ENCODE measurements at regions of chr20 and their contacts with region 1.

Region 1: GRCh38 chr20:36808317-36809257 is 35.0 kb upstream of the DSN1 start:
- DNase-seq: peak; percentile 36
- H3K4me3 ChIP-seq: no peak overlapping the region
- H3K27ac ChIP-seq: no peak overlapping the region
- H3K4me1 ChIP-seq: no peaks in the 10 kb centered on the region
- H3K27me3 ChIP-seq: no peaks in the 10 kb centered on the region
- CTCF ChIP-seq: peak; percentile 84 to 90
- POLR2A ChIP-seq: no peak

Region 2: GRCh38 chr20:36666181-36666740 is 142.3 kb before region 1 on chr20:
- CTCF ChIA-PET with region 1: interaction called, 13 read pairs
- POLR2A ChIA-PET with region 1: no interaction called
- dilution Hi-C with region 1: no loop called
- intact Hi-C with region 1: no loop called
- DNase-seq: peak; percentile 20
- H3K4me3 ChIP-seq: no peak overlapping the region
- H3K27ac ChIP-seq: no peak overlapping the region
- H3K4me1 ChIP-seq: no peaks in the 10 kb centered on the region
- H3K27me3 ChIP-seq: no peaks in the 10 kb centered on the region
- CTCF ChIP-seq: no peak
- POLR2A ChIP-seq: no peak

Region 3: GRCh38 chr20:36792422-36792821 is 16.2 kb before region 1 on chr20:
- CTCF ChIA-PET with region 1: interaction called, 16 read pairs
- POLR2A ChIA-PET with region 1: interaction called, 4 read pairs
- dilution Hi-C with region 1: no loop called
- intact Hi-C with region 1: no loop called
- DNase-seq: peak; percentile 68
- H3K4me3 ChIP-seq: no peak overlapping the region
- H3K27ac ChIP-seq: no peak overlapping the region
- H3K4me1 ChIP-seq: no peaks in the 10 kb centered on the region
- H3K27me3 ChIP-seq: no peaks in the 10 kb centered on the region
- CTCF ChIP-seq: peak; percentile 42 to 69
- POLR2A ChIP-seq: no peak

Region 4: DNA sequence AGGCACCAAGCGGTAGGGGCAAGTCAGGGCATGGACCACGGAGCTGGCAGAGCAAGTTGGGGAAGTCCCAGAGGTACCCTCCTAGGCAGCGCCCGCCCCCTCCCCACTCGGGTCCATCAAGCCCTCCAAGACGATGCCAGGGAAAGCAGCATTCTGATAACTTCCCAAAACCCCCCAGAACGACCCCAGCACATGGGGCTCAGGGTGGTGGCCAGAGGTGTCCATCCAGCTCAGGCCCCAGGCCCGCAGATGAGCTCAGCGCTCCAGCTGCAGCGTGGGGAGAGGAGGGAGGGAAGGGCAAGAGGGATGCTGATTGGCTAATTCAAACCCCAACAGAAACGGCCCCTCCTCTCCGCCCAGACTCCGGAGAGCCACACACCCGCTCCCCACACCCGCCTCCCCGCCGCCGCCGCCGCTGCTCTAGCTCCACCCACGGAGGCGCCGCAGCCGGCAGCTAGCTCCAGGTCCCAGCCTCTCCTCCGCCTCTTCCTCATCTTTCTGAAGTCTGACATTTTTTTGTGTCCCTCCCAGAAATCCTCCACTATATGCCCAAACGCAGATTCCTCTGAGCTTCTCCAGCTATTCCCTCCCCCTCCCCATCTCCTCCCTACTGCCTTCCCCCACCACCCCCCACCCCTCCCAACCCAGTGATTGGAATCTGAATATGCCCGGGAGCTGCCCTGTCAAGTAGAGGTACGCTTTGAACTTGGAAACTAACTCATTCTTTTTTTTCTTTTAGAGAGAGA is 27.0 kb after region 1 on chr20:
- CTCF ChIA-PET with region 1: interaction called, 46 read pairs
- POLR2A ChIA-PET with region 1: no interaction called
- dilution Hi-C with region 1: no loop called
- intact Hi-C with region 1: no loop called
- DNase-seq: peak; percentile 94
- H3K4me3 ChIP-seq: no peak overlapping the region
- H3K27ac ChIP-seq: peak overlapping the region; percentile 43
- H3K4me1 ChIP-seq: peaks cover 38% of the 10 kb centered on the region
- H3K27me3 ChIP-seq: no peaks in the 10 kb centered on the region
- CTCF ChIP-seq: no peak
- POLR2A ChIP-seq: peak; percentile 69

Region 5: DNA sequence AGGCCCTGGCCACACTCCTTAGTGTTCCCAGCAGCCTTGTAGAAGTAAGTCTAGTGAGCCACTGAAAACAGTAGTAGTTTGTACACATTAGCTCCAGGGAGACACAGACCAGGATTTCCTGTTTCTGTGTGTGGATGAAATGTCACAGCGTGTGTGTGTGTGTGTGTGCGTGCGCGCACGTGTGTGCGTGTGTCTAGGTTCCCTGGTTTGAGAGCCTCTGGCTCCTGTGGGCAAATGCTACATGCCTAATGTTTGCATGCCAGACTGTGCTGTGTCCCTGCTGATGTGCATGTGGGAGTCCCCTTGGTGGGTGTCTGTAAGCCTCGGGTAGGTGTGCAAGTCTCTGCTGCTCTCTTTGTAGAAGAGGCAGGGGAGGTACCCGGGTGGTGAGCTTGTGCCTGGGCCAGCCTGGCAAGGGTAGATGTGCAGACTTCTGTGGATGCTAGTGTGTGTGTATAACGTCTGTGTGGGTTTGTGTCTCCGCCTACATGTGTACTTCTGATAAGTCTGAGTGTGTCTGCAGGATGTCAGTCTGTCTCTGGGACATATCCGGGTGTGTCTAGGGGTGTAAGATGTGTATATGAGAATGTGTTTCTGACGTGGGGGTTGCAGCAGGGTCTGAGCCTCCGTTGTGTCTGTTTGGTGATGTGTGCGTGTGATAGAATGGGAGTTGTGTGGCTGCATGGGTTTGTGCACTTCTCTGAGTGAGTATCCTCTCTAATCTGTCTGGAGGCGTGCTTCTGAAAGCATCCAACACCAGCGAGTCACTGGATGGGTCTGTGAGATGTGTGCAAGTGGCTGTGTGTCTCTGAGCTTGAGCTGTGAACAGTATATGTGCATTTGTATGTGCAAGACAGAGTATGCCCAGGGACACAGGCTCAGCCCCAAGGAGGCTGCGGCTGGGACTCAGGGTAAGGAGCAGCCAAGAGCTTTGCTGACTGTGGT is 48.4 kb after region 1 on chr20:
- CTCF ChIA-PET with region 1: interaction called, 60 read pairs
- POLR2A ChIA-PET with region 1: no interaction called
- dilution Hi-C with region 1: no loop called
- intact Hi-C with region 1: loop called (anchors 2 kb)
- DNase-seq: peak; percentile 85
- H3K4me3 ChIP-seq: no peak overlapping the region
- H3K27ac ChIP-seq: peak overlapping the region; percentile 47
- H3K4me1 ChIP-seq: peaks cover 48% of the 10 kb centered on the region
- H3K27me3 ChIP-seq: no peaks in the 10 kb centered on the region
- CTCF ChIP-seq: no peak
- POLR2A ChIP-seq: no peak

Region 6: GRCh38 chr20:36886859-36887751 is 78.5 kb after region 1 on chr20:
- CTCF ChIA-PET with region 1: interaction called, 23 read pairs
- POLR2A ChIA-PET with region 1: no interaction called
- dilution Hi-C with region 1: no loop called
- intact Hi-C with region 1: loop called (anchors 5 kb)
- DNase-seq: peak; percentile 77
- H3K4me3 ChIP-seq: no peak overlapping the region
- H3K27ac ChIP-seq: no peak overlapping the region
- H3K4me1 ChIP-seq: no peaks in the 10 kb centered on the region
- H3K27me3 ChIP-seq: no peaks in the 10 kb centered on the region
- CTCF ChIP-seq: peak; percentile 95 to 97
- POLR2A ChIP-seq: no peak

Region 7: GRCh38 chr20:37365760-37366638 is 557.4 kb after region 1 on chr20:
- CTCF ChIA-PET with region 1: no interaction called
- POLR2A ChIA-PET with region 1: no interaction called
- dilution Hi-C with region 1: no loop called
- intact Hi-C with region 1: no loop called
- DNase-seq: no peak
- H3K4me3 ChIP-seq: no peak overlapping the region
- H3K27ac ChIP-seq: no peak overlapping the region
- H3K4me1 ChIP-seq: no peaks in the 10 kb centered on the region
- H3K27me3 ChIP-seq: no peaks in the 10 kb centered on the region
- CTCF ChIP-seq: no peak
- POLR2A ChIP-seq: no peak

Measured in endothelial cell of umbilical vein (primary cell).